CD4-positive, alpha-beta T cell (primary cell): ENCODE measurements at regions of chr11 and their contacts with region 1.

Region 1: DNA sequence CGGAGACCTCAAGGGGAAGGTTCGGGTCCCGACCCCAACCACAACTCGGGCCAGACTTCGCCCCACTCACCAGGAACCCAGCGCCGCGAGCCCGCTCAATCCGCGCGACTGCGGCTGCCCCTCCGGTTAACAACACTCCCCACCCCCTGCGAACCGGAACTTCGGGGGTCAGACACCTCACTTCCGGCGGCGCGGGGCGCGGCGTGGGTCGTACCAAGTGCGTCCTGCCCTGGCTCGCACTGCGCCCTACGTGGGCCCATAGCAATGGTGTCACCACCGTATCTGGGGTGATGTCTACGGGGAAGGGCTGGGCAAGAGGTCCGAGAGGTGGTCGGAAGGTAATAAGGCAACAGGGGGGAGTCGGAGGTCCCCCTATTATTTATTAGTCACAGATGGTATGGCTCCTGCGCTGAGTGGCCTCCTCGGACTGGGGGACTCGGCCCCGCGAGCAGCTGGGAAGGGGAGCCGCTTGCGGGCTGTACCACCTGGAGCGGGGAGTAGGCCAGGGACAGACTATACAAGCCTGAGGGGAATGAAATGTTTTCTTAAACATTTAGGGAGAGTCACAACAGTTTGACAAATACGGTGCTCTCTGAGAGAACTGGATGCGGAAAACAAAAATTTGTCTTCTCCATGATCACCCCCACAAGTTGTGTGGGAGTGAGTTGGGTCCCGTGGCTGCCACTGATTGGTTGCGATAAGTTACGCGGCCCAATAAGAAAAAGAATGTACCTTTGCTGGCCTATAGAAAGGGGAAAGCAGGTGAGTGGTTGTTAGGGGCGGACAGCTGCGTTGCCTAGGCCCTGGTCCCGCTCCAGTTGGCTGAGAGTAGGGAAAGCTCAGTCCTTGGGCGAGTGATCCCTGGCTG is at the start of gene SYVN1:
- DNase-seq: peak; percentile 86 to 96 (median 90)
- ATAC-seq: peak; percentile 88
- H3K4me3 ChIP-seq: peak within 1 kb of the TSS; percentile 83
- H3K4me3 Mint-ChIP-seq: peak within 1 kb of the TSS; percentile 99
- H3K27ac ChIP-seq: peak within 1 kb of the TSS; percentile 96 to 99
- H3K27ac Mint-ChIP-seq: peak within 1 kb of the TSS; percentile 100
- H3K4me1 ChIP-seq: peaks cover 47% of the 10 kb centered on the region
- H3K4me1 Mint-ChIP-seq: peaks cover 45% of the 10 kb centered on the region
- H3K27me3 ChIP-seq: no peaks in the 10 kb centered on the region
- H3K27me3 Mint-ChIP-seq: no peaks in the 10 kb centered on the region
- CTCF ChIP-seq: no peak
- total RNA-seq, gene SYVN1: 89.1 to 96.8 TPM

Region 2: GRCh38 chr11:64924102-64924851 is 210.3 kb before region 1 on chr11 and contains the start of gene PPP2R5B:
- CTCF ChIA-PET with region 1: no interaction called
- POLR2A ChIA-PET with region 1: interaction called, 11 read pairs
- intact Hi-C with region 1: loop called in 1 of 2 experiments (anchors 5 kb)
- DNase-seq: peak; percentile 79 to 95 (median 90)
- ATAC-seq: peak; percentile 92
- H3K4me3 ChIP-seq: peak within 1 kb of the TSS; percentile 69
- H3K4me3 Mint-ChIP-seq: peak within 1 kb of the TSS; percentile 95
- H3K27ac ChIP-seq: peak within 1 kb of the TSS; percentile 73 to 89
- H3K27ac Mint-ChIP-seq: peak within 1 kb of the TSS; percentile 97
- H3K4me1 ChIP-seq: peaks cover 30% of the 10 kb centered on the region
- H3K4me1 Mint-ChIP-seq: peaks cover 13% of the 10 kb centered on the region
- H3K27me3 ChIP-seq: no peaks in the 10 kb centered on the region
- H3K27me3 Mint-ChIP-seq: no peaks in the 10 kb centered on the region
- CTCF ChIP-seq: no peak
- total RNA-seq, gene PPP2R5B: 16.8 to 18.3 TPM

Region 3: DNA sequence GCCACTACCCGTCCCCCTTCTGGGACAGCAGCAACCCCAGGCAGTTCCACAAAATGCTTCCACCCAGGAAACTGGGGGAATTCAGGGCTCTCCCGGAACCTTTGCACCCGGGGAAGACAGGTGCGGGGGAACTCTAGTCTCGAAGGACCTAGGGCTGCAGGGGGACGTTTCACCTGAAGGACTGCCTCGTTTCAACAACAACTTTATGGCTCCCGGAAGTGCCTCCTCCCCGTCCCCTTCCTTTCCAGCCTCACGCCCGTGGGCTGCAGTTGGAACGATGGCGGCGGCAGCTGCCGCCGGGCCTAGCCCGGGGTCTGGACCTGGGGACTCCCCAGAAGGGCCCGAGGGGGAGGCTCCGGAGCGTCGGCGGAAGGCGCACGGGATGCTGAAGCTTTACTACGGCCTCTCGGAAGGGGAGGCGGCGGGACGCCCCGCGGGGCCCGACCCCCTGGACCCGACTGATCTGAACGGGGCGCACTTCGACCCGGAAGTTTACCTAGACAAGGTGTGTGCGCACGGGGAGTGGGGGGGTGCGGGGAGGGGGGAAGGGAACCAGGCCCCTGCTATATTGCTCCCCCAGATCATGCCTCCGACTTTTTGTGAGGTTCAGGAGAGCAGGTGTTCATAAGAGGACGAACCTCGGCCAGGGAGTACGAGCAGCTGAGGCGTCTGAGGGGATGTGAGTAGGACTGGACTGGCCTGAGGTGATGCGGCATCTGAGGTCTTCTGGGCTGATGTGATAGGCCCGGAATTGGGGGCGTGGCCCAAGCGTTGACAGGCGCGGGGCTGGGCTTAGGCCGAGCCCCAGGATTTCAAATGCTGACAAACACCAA is 38.4 kb before region 1 on chr11 and contains the start of gene VPS51:
- CTCF ChIA-PET with region 1: no interaction called
- POLR2A ChIA-PET with region 1: interaction called, 31 read pairs
- intact Hi-C with region 1: loop called in 1 of 2 experiments (anchors 1 kb)
- DNase-seq: peak; percentile 76 to 94 (median 83)
- ATAC-seq: peak; percentile 85
- H3K4me3 ChIP-seq: peak within 1 kb of the TSS; percentile 79
- H3K4me3 Mint-ChIP-seq: peak within 1 kb of the TSS; percentile 96
- H3K27ac ChIP-seq: peak within 1 kb of the TSS; percentile 78 to 85
- H3K27ac Mint-ChIP-seq: peak within 1 kb of the TSS; percentile 98
- H3K4me1 ChIP-seq: peaks cover 23% of the 10 kb centered on the region
- H3K4me1 Mint-ChIP-seq: peaks cover 21% of the 10 kb centered on the region
- H3K27me3 ChIP-seq: no peaks in the 10 kb centered on the region
- H3K27me3 Mint-ChIP-seq: no peaks in the 10 kb centered on the region
- CTCF ChIP-seq: no peak
- total RNA-seq, gene VPS51: 243 to 246 TPM

Region 4: GRCh38 chr11:65180877-65181568 is 46.4 kb after region 1 on chr11:
- CTCF ChIA-PET with region 1: no interaction called
- POLR2A ChIA-PET with region 1: interaction called, 30 read pairs
- intact Hi-C with region 1: loop called in 1 of 2 experiments (anchors 5 kb)
- DNase-seq: peak; percentile 22 to 80 (median 45)
- ATAC-seq: peak; percentile 67
- H3K4me3 ChIP-seq: peak overlapping the region; percentile 97
- H3K4me3 Mint-ChIP-seq: peak overlapping the region; percentile 94
- H3K27ac ChIP-seq: no peak overlapping the region
- H3K27ac Mint-ChIP-seq: peak overlapping the region; percentile 83
- H3K4me1 ChIP-seq: peaks cover 37% of the 10 kb centered on the region
- H3K4me1 Mint-ChIP-seq: peaks cover 12% of the 10 kb centered on the region
- H3K27me3 ChIP-seq: no peaks in the 10 kb centered on the region
- H3K27me3 Mint-ChIP-seq: no peaks in the 10 kb centered on the region
- CTCF ChIP-seq: peak; percentile 65

Region 5: GRCh38 chr11:65314501-65315203 is 180.0 kb after region 1 on chr11 and contains the start of gene CDC42EP2:
- CTCF ChIA-PET with region 1: no interaction called
- POLR2A ChIA-PET with region 1: interaction called, 12 read pairs
- intact Hi-C with region 1: no loop called
- DNase-seq: peak; percentile 35 to 86 (median 72)
- ATAC-seq: peak; percentile 89
- H3K4me3 ChIP-seq: peak within 1 kb of the TSS; percentile 90
- H3K4me3 Mint-ChIP-seq: peak within 1 kb of the TSS; percentile 86
- H3K27ac ChIP-seq: no peak within 1 kb of the TSS
- H3K27ac Mint-ChIP-seq: no peak within 1 kb of the TSS
- H3K4me1 ChIP-seq: peaks cover 21% of the 10 kb centered on the region
- H3K4me1 Mint-ChIP-seq: peaks cover 12% of the 10 kb centered on the region
- H3K27me3 ChIP-seq: peaks cover 0 to 2% of the 10 kb centered on the region in 2 experiments
- H3K27me3 Mint-ChIP-seq: no peaks in the 10 kb centered on the region
- CTCF ChIP-seq: no peak
- total RNA-seq, gene CDC42EP2: 0.96 TPM in 1 of 2 experiments, not detected in the other

Region 6: DNA sequence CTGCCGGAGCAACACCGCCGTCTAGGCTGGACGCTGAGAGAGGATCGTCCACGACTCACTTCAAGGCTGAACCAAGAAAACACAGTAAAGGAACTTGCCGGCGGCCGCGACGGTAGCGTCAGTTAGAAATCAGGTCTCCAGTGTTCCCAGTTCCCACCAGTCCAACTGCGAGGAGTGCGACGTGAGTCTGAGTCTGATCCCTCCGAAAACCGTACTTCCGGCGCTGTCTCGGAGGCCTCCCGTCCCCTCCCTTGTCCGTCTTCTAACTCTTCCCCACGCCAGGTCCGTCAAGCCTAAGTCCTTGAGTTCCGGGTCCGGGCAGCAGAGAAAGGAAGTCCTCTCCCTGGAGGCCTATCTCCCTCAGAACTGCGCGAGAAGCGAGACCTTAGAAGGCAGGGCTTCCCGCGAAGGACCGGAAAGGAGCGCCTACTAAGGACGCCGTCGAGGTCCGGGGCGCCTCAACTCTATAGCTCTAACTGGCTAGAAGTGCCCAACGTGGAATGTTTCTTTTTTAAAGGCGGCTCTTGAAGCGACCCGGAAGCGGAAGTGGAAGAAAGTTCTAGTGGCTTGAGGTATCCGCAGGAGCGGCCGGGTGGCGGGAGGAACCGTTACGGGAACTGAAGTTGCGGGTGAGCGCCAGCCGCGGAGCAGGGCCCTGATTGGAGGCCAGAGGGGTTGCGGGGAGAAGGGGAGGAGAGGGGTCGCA is 867.5 kb after region 1 on chr11 and contains the starts of genes BANF1 and EIF1AD:
- CTCF ChIA-PET with region 1: no interaction called
- POLR2A ChIA-PET with region 1: no interaction called
- intact Hi-C with region 1: no loop called
- DNase-seq: peak; percentile 84 to 98 (median 89)
- ATAC-seq: peak; percentile 77
- H3K4me3 ChIP-seq: peak within 1 kb of the TSS; percentile 75
- H3K4me3 Mint-ChIP-seq: peak within 1 kb of the TSS; percentile 94
- H3K27ac ChIP-seq: peak within 1 kb of the TSS; percentile 86 to 96
- H3K27ac Mint-ChIP-seq: peak within 1 kb of the TSS; percentile 97
- H3K4me1 ChIP-seq: peaks cover 39% of the 10 kb centered on the region
- H3K4me1 Mint-ChIP-seq: peaks cover 54% of the 10 kb centered on the region
- H3K27me3 ChIP-seq: no peaks in the 10 kb centered on the region
- H3K27me3 Mint-ChIP-seq: no peaks in the 10 kb centered on the region
- CTCF ChIP-seq: no peak
- total RNA-seq, gene BANF1: 21.3 to 22.3 TPM
- total RNA-seq, gene EIF1AD: 88.2 to 94.1 TPM